Breast epithelium (tissue), 4 donors: ENCODE measurements at regions of chr1 and their contacts with region 1.

Region 1: DNA sequence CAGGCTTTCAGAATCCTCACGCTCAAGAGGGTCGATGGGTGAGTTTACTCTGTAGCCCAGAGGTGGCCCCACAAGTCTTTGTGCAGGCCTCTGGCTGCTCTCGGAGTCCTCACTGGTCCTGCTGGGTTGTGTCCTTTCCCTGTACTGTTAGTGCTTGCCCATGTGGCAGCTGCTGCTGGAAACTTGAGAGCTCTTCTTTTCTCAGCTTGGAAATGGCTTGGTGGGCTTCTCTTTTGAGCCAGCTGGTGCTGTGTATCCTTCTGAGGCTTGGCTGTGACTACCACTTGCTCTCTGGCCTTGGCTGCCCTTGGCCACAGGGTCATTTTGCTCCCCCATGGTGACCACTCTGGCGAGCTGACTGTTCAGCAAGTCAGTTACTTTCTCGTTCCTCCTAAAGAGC is 82.2 kb upstream of the LMO4 start:
- DNase-seq: no peak
- H3K4me3 ChIP-seq: no peak overlapping the region
- H3K27ac ChIP-seq: no peak overlapping the region
- H3K4me1 ChIP-seq: no peaks in the 10 kb centered on the region
- H3K27me3 ChIP-seq: no peaks in the 10 kb centered on the region
- CTCF ChIP-seq: no peak
- POLR2A ChIP-seq: no peak

Region 2: DNA sequence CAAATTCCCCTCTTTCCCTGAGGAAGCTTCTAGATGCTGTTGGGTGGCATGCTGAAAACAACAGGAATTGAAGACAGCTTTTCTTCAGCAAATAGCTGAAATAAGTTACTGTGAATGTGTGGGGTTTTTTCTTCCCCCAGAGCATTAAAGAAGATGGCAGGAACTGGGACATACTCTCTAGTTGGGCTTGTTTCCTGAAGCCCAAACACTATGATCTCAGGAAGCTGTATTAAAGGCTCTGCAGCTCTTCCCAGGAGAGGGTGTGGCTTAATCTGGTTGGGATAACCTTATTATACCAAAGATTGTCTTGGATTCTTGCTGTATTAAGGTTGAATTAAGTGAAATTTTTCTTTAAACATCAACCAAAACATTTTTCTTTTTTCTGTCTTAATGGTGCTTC is 17.3 kb after region 1 on chr1:
- intact Hi-C with region 1: loop called (anchors 1 kb)
- DNase-seq: no peak
- H3K4me3 ChIP-seq: no peak overlapping the region
- H3K27ac ChIP-seq: no peak overlapping the region
- H3K4me1 ChIP-seq: no peaks in the 10 kb centered on the region
- H3K27me3 ChIP-seq: no peaks in the 10 kb centered on the region
- CTCF ChIP-seq: no peak
- POLR2A ChIP-seq: no peak

Region 3: GRCh38 chr1:87524021-87524754 is 277.8 kb after region 1 on chr1:
- intact Hi-C with region 1: no loop called
- DNase-seq: no peak
- H3K4me3 ChIP-seq: no peak overlapping the region
- H3K27ac ChIP-seq: no peak overlapping the region
- H3K4me1 ChIP-seq: no peaks in the 10 kb centered on the region
- H3K27me3 ChIP-seq: no peaks in the 10 kb centered on the region
- CTCF ChIP-seq: no peak
- POLR2A ChIP-seq: no peak